Activated naive CD4-positive, alpha-beta T cell treated with anti-CD3 and anti-CD28 coated beads for 36 hours (primary cell): ENCODE measurements at regions of chr3 and their contacts with region 1.

Region 1: DNA sequence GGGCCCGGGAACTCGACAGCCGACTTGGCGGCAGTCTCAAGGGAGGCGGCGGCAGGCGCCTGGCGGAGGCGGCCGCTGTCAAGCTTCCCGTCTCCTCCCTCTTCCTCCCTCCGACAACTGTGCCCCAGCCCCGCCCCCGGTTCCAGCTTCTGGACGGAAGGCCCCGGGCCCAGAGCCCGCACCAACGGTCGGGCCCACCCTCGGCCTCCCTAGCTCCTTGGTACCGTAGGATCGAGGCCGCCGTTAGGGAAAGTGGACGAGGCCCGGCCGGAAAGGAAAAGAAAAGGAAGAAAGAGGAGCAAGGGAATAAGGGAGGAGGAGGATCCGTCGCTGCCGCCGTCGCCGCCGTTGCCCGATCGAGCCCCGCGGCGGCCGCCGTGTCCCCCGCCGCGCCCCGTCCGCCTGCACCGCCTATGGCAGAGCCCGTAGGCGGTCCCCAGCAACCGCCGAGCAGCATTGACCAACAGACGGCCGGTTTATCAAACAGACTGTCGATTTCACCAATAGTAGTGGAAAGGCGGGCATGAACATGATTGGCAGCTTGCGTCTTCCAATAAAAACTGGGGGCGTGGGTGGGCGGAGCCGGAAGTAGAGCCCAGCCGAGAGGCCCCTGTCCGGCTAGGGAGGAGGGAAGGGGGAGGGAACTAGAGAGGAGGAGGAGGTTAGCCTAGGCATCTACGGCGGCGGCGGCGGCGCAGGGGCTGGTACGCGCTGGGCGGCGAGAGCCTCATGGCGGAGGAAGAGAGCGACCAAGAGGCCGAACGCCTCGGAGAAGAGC is at the starts of genes CGGBP1 and ZNF654:
- DNase-seq: peak; percentile 99
- H3K4me3 Mint-ChIP-seq: peak within 1 kb of the TSS; percentile 90
- H3K27ac Mint-ChIP-seq: peak within 1 kb of the TSS; percentile 98
- H3K4me1 Mint-ChIP-seq: peaks cover 43% of the 10 kb centered on the region
- H3K27me3 Mint-ChIP-seq: no peaks in the 10 kb centered on the region
- total RNA-seq, gene CGGBP1: 91.9 to 94.0 TPM
- total RNA-seq, gene ZNF654: 17.8 to 18.8 TPM

Region 2: DNA sequence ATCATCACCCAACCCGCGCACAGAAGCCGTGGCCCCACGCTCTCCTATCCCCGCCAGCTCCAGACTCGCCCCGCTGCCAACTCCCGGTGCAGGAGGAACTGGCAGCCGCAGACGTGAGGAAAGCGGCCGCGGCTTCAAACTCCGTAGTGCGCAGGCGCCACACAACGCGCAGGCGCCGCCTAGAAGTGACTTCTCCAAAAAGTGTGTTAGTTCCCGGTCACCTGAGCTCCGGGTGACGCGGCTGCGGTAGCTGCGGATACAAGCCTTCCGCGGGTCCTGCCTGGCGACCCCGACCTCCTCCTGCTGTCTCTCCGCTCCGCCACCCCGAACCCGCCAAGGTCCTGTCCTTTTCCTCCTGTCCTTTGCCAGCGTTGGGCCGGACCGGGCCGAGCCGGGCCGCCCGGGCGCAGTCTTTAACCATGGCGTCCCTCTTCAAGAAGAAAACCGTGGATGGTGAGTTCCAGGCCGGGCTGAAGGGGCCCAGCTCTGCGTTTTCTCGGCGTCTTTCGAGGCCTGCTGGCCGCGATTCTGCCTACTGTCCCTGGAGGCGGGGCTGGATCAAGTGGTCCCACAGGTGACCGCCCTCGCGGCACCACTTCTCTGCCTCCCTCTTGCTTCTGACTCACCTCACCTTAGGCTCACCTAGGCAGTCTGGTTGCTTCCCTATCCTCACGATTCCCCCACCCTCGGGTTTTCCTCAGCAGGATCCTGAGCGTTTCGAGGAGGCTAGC is 831.5 kb before region 1 on chr3 and contains the start of gene CHMP2B:
- CTCF ChIA-PET with region 1: no interaction called
- intact Hi-C with region 1: loop called (anchors 2 kb)
- DNase-seq: peak; percentile 92
- H3K4me3 Mint-ChIP-seq: peak within 1 kb of the TSS; percentile 83
- H3K27ac Mint-ChIP-seq: peak within 1 kb of the TSS; percentile 85
- H3K4me1 Mint-ChIP-seq: peaks cover 31% of the 10 kb centered on the region
- H3K27me3 Mint-ChIP-seq: peaks cover 14% of the 10 kb centered on the region
- total RNA-seq, gene CHMP2B: 24.9 to 26.1 TPM

Region 3: GRCh38 chr3:87997298-87997697 is 61.5 kb before region 1 on chr3:
- CTCF ChIA-PET with region 1: no interaction called
- intact Hi-C with region 1: loop called (anchors 1 kb)
- DNase-seq: peak; percentile 73
- H3K4me3 Mint-ChIP-seq: peak overlapping the region; percentile 21
- H3K27ac Mint-ChIP-seq: no peak overlapping the region
- H3K4me1 Mint-ChIP-seq: peaks cover 13% of the 10 kb centered on the region
- H3K27me3 Mint-ChIP-seq: no peaks in the 10 kb centered on the region

Region 4: DNA sequence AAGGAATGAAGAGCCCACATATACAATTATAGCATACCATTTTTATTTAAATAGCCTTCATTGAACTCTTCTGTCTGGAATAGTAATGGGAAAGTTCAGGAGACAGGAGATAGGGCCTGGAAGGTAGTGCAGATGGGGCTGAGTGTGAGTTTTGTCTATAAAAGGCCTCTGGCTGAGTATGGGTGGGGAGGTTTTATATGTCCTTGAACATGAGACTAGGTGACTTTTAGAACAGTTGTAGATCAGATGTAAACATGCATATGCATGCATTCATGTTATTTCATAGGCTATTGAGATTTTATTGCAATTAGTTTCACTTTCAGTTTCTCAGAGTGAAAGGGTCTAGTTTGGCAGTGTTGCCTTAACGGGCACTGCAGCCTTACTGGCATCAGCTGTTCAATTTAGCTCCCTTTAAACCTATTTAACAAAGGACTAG is 27.1 kb before region 1 on chr3:
- CTCF ChIA-PET with region 1: no interaction called
- intact Hi-C with region 1: loop called (anchors 1 kb)
- DNase-seq: no peak
- H3K4me3 Mint-ChIP-seq: peak overlapping the region; percentile 77
- H3K27ac Mint-ChIP-seq: peak overlapping the region; percentile 72
- H3K4me1 Mint-ChIP-seq: peaks cover 25% of the 10 kb centered on the region
- H3K27me3 Mint-ChIP-seq: no peaks in the 10 kb centered on the region

Region 5: GRCh38 chr3:88046766-88047165 is 12.0 kb before region 1 on chr3:
- CTCF ChIA-PET with region 1: interaction called, 3 read pairs
- intact Hi-C with region 1: loop called (anchors 1 kb)
- DNase-seq: no peak
- H3K4me3 Mint-ChIP-seq: no peak overlapping the region
- H3K27ac Mint-ChIP-seq: no peak overlapping the region
- H3K4me1 Mint-ChIP-seq: peaks cover 15% of the 10 kb centered on the region
- H3K27me3 Mint-ChIP-seq: no peaks in the 10 kb centered on the region

Region 6: DNA sequence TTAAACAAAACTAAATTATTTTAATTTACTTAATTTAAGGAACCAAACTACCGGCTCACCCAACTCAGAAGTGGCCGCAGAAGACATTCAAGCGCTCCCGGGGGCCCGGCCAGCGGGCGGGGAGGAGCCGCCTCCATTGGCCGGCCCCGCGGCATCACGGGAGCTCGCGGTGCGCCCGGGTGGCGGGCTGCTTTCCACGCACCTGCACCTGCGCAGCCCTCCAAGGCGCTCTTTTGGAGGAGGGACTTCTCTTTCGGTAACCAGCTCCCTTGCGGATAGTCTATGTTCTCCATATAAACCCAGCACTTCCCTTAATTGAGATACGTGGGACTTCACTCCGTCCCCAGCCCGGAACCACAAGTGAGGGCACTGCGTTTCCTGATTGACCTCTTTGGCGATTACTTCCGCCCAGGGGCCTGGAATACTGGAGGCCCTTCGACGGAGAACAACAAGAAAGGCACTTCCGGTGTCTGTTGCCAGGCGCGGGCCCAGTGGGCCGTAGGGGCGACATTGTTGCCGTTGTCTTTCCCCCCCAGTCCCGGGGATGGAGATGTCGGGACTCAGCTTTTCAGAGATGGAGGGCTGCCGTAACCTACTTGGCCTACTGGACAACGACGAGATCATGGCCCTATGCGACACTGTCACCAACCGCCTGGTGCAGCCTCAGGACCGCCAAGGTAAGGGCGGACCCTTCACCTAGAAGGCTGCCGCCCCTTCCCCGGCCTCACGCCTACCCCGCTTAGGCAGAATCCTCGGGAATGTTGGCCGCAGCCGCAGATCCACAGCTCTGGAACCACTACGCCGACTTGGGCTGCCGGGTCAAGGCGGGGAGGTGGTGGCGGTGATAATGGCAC is 91.0 kb after region 1 on chr3 and contains the start of gene C3orf38:
- CTCF ChIA-PET with region 1: interaction called, 3 read pairs
- intact Hi-C with region 1: loop called (anchors 1 kb)
- DNase-seq: peak; percentile 82
- H3K4me3 Mint-ChIP-seq: peak within 1 kb of the TSS; percentile 88
- H3K27ac Mint-ChIP-seq: peak within 1 kb of the TSS; percentile 98
- H3K4me1 Mint-ChIP-seq: peaks cover 29% of the 10 kb centered on the region
- H3K27me3 Mint-ChIP-seq: peaks cover 2% of the 10 kb centered on the region
- total RNA-seq, gene C3orf38: 16.0 to 16.7 TPM

Region 7: DNA sequence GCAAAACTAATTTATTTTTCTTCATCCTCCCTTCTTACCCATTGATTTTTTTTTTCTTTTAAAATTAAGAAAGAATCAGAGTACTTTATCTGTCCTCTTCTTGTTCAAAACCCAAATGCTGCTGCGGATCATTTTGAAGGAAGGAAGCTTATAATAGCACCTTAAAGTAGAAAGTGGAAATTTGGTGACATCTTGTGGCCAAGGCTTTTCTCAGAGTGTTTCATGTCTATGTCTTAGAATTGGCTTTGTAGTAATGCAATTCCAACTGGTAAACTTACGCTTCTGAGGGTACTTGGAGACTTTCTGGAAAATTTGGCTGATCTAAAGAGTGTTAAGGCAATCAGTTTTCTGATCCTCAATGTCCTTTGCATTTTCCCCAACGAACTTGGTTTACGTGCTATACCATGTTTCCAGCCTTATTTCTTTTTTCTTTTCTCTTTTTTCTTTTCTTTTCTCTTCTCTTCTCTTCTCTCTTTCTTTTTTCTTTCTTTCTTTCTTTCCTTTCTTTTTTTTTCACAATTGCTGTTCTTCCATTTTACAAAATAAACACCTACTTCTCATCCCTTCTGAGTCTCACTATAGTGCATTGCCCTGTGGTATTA is 121.7 kb after region 1 on chr3:
- CTCF ChIA-PET with region 1: no interaction called
- intact Hi-C with region 1: loop called (anchors 1 kb)
- DNase-seq: peak; percentile 62
- H3K4me3 Mint-ChIP-seq: no peak overlapping the region
- H3K27ac Mint-ChIP-seq: no peak overlapping the region
- H3K4me1 Mint-ChIP-seq: no peaks in the 10 kb centered on the region
- H3K27me3 Mint-ChIP-seq: no peaks in the 10 kb centered on the region